Activated CD8-positive, alpha-beta T cell treated with anti-CD3 and anti-CD28 coated beads for 36 hours (primary cell): ENCODE measurements at regions of chr2 and their contacts with region 1.

Region 1: GRCh38 chr2:162013514-162014475 is 60.2 kb downstream of the DPP4 start:
- DNase-seq: no peak
- ATAC-seq: peak; percentile 45
- H3K4me3 Mint-ChIP-seq: peak overlapping the region; percentile 53
- H3K27ac Mint-ChIP-seq: peak overlapping the region; percentile 89
- H3K4me1 Mint-ChIP-seq: peaks cover 67% of the 10 kb centered on the region
- H3K27me3 Mint-ChIP-seq: no peaks in the 10 kb centered on the region
- CTCF ChIP-seq: no peak

Region 2: DNA sequence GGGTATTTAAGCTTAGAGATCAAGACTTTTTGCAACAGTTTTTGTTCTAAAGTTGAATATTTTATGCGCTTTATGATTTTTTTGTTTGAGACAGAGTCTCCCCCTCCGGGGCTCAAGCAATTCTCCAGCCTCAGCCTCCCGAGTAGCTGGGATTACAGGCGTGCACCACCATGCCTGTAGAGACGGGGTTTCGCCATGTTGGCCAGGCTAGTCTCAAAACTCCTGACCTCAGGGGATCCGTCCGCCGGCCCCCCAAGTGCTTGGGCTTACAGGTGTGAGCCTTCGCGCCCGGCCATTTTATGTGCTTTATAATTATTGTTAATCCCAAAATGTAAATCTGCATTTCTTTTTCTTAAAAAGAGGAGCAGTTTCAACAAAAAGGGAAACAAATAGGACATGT is 568.7 kb before region 1 on chr2:
- CTCF ChIA-PET with region 1: no interaction called
- POLR2A ChIA-PET with region 1: no interaction called
- intact Hi-C with region 1: no loop called
- DNase-seq: no peak
- ATAC-seq: no peak
- H3K4me3 Mint-ChIP-seq: no peak overlapping the region
- H3K27ac Mint-ChIP-seq: no peak overlapping the region
- H3K4me1 Mint-ChIP-seq: no peaks in the 10 kb centered on the region
- H3K27me3 Mint-ChIP-seq: peaks cover 22% of the 10 kb centered on the region
- CTCF ChIP-seq: no peak

Region 3: DNA sequence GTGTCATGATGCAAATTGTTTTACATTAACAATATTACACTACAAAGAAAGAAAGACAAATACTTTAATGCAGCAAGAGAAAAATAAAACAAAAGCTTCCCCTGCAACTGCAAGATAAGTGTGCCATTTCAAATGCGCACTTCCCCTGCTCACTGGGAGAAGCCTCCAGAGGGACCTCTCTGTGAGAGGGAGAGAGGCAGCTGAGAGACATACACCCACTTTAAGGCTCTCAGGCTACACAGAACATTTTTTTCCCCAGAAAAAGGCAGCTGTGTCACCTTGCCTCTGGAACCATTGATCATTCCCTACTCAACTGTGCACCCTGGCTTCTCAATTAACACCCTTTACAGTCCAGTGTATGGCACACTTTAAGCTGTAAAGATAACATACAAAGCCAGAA is 14.9 kb before region 1 on chr2:
- CTCF ChIA-PET with region 1: interaction called, 17 read pairs
- POLR2A ChIA-PET with region 1: interaction called, 5 read pairs
- intact Hi-C with region 1: no loop called
- DNase-seq: no peak
- ATAC-seq: no peak
- H3K4me3 Mint-ChIP-seq: no peak overlapping the region
- H3K27ac Mint-ChIP-seq: no peak overlapping the region
- H3K4me1 Mint-ChIP-seq: peaks cover 36% of the 10 kb centered on the region
- H3K27me3 Mint-ChIP-seq: no peaks in the 10 kb centered on the region
- CTCF ChIP-seq: no peak

Region 4: DNA sequence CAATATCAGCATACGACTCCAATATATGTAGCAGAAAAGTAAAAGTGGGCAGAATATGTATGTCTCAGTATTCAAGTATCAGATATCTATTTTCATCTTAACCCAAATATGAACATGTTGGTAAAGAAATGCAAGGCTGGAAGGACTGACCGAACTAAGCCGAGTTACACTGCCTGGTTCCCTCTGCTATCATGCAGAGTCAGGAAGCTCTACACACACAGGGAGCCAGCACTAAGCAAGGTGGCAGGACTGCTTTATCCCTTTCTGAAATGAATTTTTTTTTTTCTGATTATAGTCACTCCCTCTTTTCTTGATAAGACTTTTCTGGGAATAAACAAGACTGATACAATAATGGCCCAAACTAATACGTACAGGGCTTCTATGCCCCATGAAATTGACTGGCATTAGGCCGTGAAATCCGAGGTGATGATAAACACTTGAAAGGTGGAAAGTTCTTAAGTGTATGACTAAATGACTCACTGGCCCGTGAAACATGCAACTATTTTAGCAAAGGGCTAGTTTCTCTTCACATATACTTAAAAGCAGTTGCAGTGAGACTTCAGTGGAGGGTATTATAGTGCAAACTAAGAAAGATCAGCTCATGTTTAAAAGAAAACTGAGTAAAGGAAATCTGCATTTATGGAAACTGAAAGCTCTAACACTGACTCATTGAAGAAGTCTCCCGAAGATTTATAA is 45.3 kb after region 1 on chr2:
- CTCF ChIA-PET with region 1: interaction called, 11 read pairs
- POLR2A ChIA-PET with region 1: interaction called, 3 read pairs
- intact Hi-C with region 1: loop called (anchors 5 kb)
- DNase-seq: peak; percentile 51
- ATAC-seq: peak; percentile 79
- H3K4me3 Mint-ChIP-seq: peak overlapping the region; percentile 52
- H3K27ac Mint-ChIP-seq: peak overlapping the region; percentile 94
- H3K4me1 Mint-ChIP-seq: peaks cover 86% of the 10 kb centered on the region
- H3K27me3 Mint-ChIP-seq: no peaks in the 10 kb centered on the region
- CTCF ChIP-seq: no peak

Region 5: GRCh38 chr2:162164802-162165201 is 151.0 kb after region 1 on chr2:
- CTCF ChIA-PET with region 1: no interaction called
- POLR2A ChIA-PET with region 1: no interaction called
- intact Hi-C with region 1: no loop called
- DNase-seq: no peak
- ATAC-seq: no peak
- H3K4me3 Mint-ChIP-seq: no peak overlapping the region
- H3K27ac Mint-ChIP-seq: no peak overlapping the region
- H3K4me1 Mint-ChIP-seq: peaks cover 2% of the 10 kb centered on the region
- H3K27me3 Mint-ChIP-seq: peaks cover 27% of the 10 kb centered on the region
- CTCF ChIP-seq: no peak

Region 6: GRCh38 chr2:162333968-162334367 is 320.2 kb after region 1 on chr2:
- CTCF ChIA-PET with region 1: no interaction called
- POLR2A ChIA-PET with region 1: no interaction called
- intact Hi-C with region 1: no loop called
- DNase-seq: peak; percentile 52
- ATAC-seq: peak; percentile 42
- H3K4me3 Mint-ChIP-seq: no peak overlapping the region
- H3K27ac Mint-ChIP-seq: no peak overlapping the region
- H3K4me1 Mint-ChIP-seq: no peaks in the 10 kb centered on the region
- H3K27me3 Mint-ChIP-seq: no peaks in the 10 kb centered on the region
- CTCF ChIP-seq: peak; percentile 59